ENCODE measurements at regions of chr2 and their contacts with region 1.

Region 1: GRCh38 chr2:156892467-156893281 is 364.8 kb upstream of the GALNT5 start:
- DNase-seq: peak; percentile 83
- ATAC-seq: peak; percentile 88
- H3K4me3 ChIP-seq: peak overlapping the region; percentile 76
- H3K27ac ChIP-seq: peak overlapping the region; percentile 28
- H3K4me1 ChIP-seq: peaks cover 15% of the 10 kb centered on the region
- H3K27me3 ChIP-seq: no peaks in the 10 kb centered on the region
- CTCF ChIP-seq: peak; percentile 76

Region 2: GRCh38 chr2:156332534-156333273 is 560.0 kb before region 1 on chr2 and contains the start of gene NR4A2:
- CTCF ChIA-PET with region 1: no interaction called
- POLR2A ChIA-PET with region 1: interaction called, 7 read pairs
- intact Hi-C with region 1: loop called (anchors 1 kb)
- DNase-seq: peak; percentile 90
- ATAC-seq: peak; percentile 62
- H3K4me3 ChIP-seq: peak within 1 kb of the TSS; percentile 95
- H3K27ac ChIP-seq: peak within 1 kb of the TSS; percentile 97
- H3K4me1 ChIP-seq: peaks cover 14% of the 10 kb centered on the region; the same call in 1 of the 2 replicates
- H3K27me3 ChIP-seq: no peaks in the 10 kb centered on the region
- CTCF ChIP-seq: no peak
- total RNA-seq, gene NR4A2: 12.0 and 13.8 TPM in 2 replicates

Region 3: GRCh38 chr2:156589381-156590079 is 303.1 kb before region 1 on chr2:
- CTCF ChIA-PET with region 1: no interaction called
- POLR2A ChIA-PET with region 1: no interaction called
- intact Hi-C with region 1: loop called (anchors 1 kb)
- DNase-seq: peak; percentile 67
- ATAC-seq: peak; percentile 76
- H3K4me3 ChIP-seq: no peak overlapping the region
- H3K27ac ChIP-seq: no peak overlapping the region
- H3K4me1 ChIP-seq: no peaks in the 10 kb centered on the region
- H3K27me3 ChIP-seq: no peaks in the 10 kb centered on the region
- CTCF ChIP-seq: peak; percentile 77

Region 4: DNA sequence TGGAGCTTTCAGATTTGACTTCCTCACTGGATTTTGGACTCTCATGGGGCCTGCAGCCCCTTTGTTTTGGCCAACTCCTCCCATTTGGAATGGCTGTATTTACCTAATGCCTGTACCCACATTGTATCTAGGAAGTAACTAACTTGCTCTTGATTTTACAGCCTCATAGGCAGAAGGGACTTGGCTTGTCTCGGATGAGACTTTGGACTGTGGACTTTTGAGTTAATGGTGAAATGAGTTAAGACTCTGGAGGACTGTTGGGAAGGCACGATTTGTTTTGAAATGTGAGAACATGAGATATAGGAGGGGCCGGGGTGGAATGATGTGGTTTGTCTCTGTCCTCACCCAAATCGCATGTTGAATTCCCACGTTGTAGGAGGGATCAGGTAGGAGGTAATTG is 131.5 kb after region 1 on chr2:
- CTCF ChIA-PET with region 1: no interaction called
- POLR2A ChIA-PET with region 1: no interaction called
- intact Hi-C with region 1: loop called (anchors 1 kb)
- DNase-seq: no peak
- ATAC-seq: no peak
- H3K4me3 ChIP-seq: no peak overlapping the region
- H3K27ac ChIP-seq: no peak overlapping the region
- H3K4me1 ChIP-seq: no peaks in the 10 kb centered on the region
- H3K27me3 ChIP-seq: no peaks in the 10 kb centered on the region
- CTCF ChIP-seq: no peak

Region 5: DNA sequence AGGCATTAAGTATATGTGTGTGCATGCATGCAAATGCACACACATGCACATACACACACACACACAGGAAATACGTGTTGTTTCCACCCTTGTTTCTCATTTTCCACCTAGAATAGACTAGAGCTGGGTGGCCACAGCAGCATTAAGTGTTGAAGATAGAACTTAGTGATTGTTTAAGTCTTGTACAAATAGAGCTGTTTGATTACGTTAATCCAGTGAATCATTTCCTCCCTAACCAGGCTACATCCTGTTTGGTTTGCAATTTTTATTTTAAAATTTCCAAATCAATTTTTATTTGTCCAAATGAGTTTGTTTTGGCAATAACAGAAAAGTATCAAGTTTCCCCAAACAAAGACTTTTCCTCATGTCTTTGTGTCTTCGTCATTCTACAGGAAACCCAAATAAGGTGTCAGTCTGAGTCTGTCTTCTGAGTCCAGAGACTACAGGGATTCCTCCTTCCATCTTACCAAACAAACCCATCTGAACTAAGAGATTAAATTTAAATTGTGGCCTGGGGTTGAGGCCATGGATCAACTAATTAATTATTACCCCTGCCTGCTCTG is 290.2 kb after region 1 on chr2:
- CTCF ChIA-PET with region 1: no interaction called
- POLR2A ChIA-PET with region 1: no interaction called
- intact Hi-C with region 1: loop called (anchors 2 kb)
- DNase-seq: peak; percentile 95
- ATAC-seq: peak; percentile 95
- H3K4me3 ChIP-seq: no peak overlapping the region; the same call in 1 of the 2 replicates
- H3K27ac ChIP-seq: peak overlapping the region; percentile 82
- H3K4me1 ChIP-seq: peaks cover 13% of the 10 kb centered on the region
- H3K27me3 ChIP-seq: no peaks in the 10 kb centered on the region
- CTCF ChIP-seq: no peak

Region 6: GRCh38 chr2:157245846-157246764 is 353.4 kb after region 1 on chr2:
- CTCF ChIA-PET with region 1: no interaction called
- POLR2A ChIA-PET with region 1: no interaction called
- intact Hi-C with region 1: no loop called
- DNase-seq: peak; percentile 91
- ATAC-seq: peak; percentile 94
- H3K4me3 ChIP-seq: peak overlapping the region; percentile 20; the same call in 1 of the 2 replicates
- H3K27ac ChIP-seq: peak overlapping the region; percentile 98
- H3K4me1 ChIP-seq: peaks cover 23% of the 10 kb centered on the region
- H3K27me3 ChIP-seq: no peaks in the 10 kb centered on the region
- CTCF ChIP-seq: no peak